ENCODE measurements at regions of chr20 and their contacts with region 1.

Region 1: GRCh38 chr20:12207875-12208274 is 290.2 kb downstream of the BTBD3 start:
- DNase-seq: no peak
- ATAC-seq: no peak
- H3K4me3 Mint-ChIP-seq: no peak overlapping the region
- H3K27ac Mint-ChIP-seq: no peak overlapping the region
- H3K4me1 Mint-ChIP-seq: no peaks in the 10 kb centered on the region
- H3K27me3 Mint-ChIP-seq: no peaks in the 10 kb centered on the region
- CTCF ChIP-seq: no peak

Region 2: DNA sequence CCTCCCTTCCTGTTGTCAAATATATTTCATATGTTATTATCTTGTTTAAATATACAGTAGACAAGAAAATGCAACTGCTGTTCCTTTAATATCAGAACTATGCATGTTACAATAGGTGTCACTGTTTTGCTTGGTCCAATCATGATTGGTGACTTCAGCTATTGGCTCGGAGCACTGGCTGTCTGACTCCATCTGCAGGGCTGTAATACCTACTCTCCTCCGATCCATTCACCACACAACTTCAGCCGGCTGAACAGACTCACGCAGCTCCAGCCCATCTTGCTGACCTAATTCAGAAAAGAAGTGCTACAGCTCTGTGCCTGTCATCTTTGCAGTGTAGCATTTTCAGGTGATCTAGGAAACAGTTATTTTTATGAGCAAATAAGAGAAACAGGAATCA is 290.2 kb before region 1 on chr20 and contains the start of gene BTBD3:
- CTCF ChIA-PET with region 1: no interaction called
- POLR2A ChIA-PET with region 1: no interaction called
- intact Hi-C with region 1: loop called (anchors 10 kb)
- DNase-seq: no peak
- ATAC-seq: peak; percentile 37
- H3K4me3 Mint-ChIP-seq: peak within 1 kb of the TSS; percentile 70
- H3K27ac Mint-ChIP-seq: no peak within 1 kb of the TSS
- H3K4me1 Mint-ChIP-seq: peaks cover 12% of the 10 kb centered on the region
- H3K27me3 Mint-ChIP-seq: no peaks in the 10 kb centered on the region
- CTCF ChIP-seq: no peak
- total RNA-seq, gene BTBD3: 1.5 and 1.6 TPM in 2 replicates

Region 3: GRCh38 chr20:12012241-12013222 is 195.3 kb before region 1 on chr20:
- CTCF ChIA-PET with region 1: interaction called, 7 read pairs
- POLR2A ChIA-PET with region 1: no interaction called
- intact Hi-C with region 1: loop called (anchors 1 kb)
- DNase-seq: no peak
- ATAC-seq: peak; percentile 75
- H3K4me3 Mint-ChIP-seq: peak overlapping the region; percentile 15
- H3K27ac Mint-ChIP-seq: no peak overlapping the region
- H3K4me1 Mint-ChIP-seq: peaks cover 4% of the 10 kb centered on the region
- H3K27me3 Mint-ChIP-seq: no peaks in the 10 kb centered on the region
- CTCF ChIP-seq: no peak

Region 4: DNA sequence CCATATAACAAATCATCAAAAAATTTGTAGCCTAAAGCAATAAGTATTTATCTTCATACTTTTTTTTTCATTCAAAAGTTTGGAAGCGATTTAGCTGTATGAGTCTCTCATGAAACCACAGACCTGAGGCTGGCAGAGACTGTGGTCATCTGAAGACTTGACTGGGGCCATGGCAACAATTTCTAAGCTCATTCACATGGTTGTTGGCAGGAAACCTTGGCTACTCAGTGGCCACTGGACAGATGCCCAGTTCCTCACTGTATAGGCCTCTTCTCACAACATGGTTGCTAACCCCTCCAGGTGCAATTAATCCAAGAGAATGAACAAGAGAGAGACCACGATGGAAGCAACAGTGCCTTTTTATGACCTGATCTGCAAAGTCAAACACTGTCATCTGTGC is 54.2 kb before region 1 on chr20:
- CTCF ChIA-PET with region 1: no interaction called
- POLR2A ChIA-PET with region 1: no interaction called
- intact Hi-C with region 1: no loop called
- DNase-seq: no peak
- ATAC-seq: no peak
- H3K4me3 Mint-ChIP-seq: no peak overlapping the region
- H3K27ac Mint-ChIP-seq: no peak overlapping the region
- H3K4me1 Mint-ChIP-seq: no peaks in the 10 kb centered on the region
- H3K27me3 Mint-ChIP-seq: no peaks in the 10 kb centered on the region
- CTCF ChIP-seq: no peak

Region 5: GRCh38 chr20:12166053-12166717 is 41.7 kb before region 1 on chr20:
- CTCF ChIA-PET with region 1: no interaction called
- POLR2A ChIA-PET with region 1: no interaction called
- intact Hi-C with region 1: no loop called
- DNase-seq: no peak
- ATAC-seq: no peak
- H3K4me3 Mint-ChIP-seq: no peak overlapping the region
- H3K27ac Mint-ChIP-seq: no peak overlapping the region
- H3K4me1 Mint-ChIP-seq: no peaks in the 10 kb centered on the region
- H3K27me3 Mint-ChIP-seq: no peaks in the 10 kb centered on the region
- CTCF ChIP-seq: no peak

Measured in activated B cell treated with CpG ODN at 0.5 μM for 24 hours (primary cell).